Activated CD4-positive, alpha-beta T cell treated with anti-CD3 and anti-CD28 coated beads for 36 hours (primary cell): ENCODE measurements at regions of chr5 and their contacts with region 1.

Region 1: GRCh38 chr5:142748568-142749249 is 21.5 kb upstream of the ARHGAP26 start:
- DNase-seq: peak; percentile 77
- ATAC-seq: peak; percentile 79
- H3K4me3 Mint-ChIP-seq: no peak overlapping the region
- H3K27ac Mint-ChIP-seq: no peak overlapping the region
- H3K4me1 Mint-ChIP-seq: peaks cover 13% of the 10 kb centered on the region
- H3K27me3 Mint-ChIP-seq: peaks cover 2% of the 10 kb centered on the region

Region 2: GRCh38 chr5:142763701-142764100 is 15.0 kb after region 1 on chr5:
- CTCF ChIA-PET with region 1: interaction called, 75 read pairs
- POLR2A ChIA-PET with region 1: interaction called, 4 read pairs
- intact Hi-C with region 1: no loop called
- DNase-seq: no peak
- ATAC-seq: no peak
- H3K4me3 Mint-ChIP-seq: no peak overlapping the region
- H3K27ac Mint-ChIP-seq: no peak overlapping the region
- H3K4me1 Mint-ChIP-seq: peaks cover 1% of the 10 kb centered on the region
- H3K27me3 Mint-ChIP-seq: no peaks in the 10 kb centered on the region

Region 3: DNA sequence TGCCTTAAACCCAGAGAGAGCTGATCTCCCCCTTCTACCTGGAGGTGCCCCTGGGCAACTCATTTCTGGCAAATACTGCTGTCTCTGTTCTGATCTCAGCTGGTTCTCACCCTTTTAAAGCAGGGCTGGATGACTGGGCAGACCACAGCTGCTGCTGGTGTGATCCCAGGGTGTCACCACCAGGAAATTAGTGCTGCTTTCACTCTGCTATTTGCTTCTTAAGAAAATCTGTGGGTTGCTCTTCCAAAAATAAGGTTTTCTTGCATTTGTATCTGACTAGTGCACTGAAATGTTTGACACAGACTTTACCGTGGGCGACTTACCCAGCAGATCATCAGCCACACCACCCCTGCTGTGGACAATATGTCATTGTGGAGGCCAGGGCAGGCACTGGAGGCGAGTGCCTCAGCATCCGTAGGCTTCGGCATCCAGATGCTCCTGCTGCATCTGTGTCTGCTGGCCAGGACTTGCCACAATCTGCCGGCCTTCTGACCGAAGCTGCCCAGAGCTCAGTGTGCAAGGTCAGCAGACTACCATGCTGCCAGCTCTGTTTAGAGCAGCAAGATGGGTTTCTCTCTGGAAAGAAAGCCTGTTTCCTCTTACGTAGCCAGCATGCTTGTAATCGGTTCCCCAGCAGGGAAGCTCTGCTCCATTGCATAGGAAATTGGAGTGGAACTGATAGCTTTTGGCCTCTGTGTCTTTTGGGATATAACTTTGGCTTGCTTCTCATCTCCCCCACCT is 35.1 kb after region 1 on chr5:
- CTCF ChIA-PET with region 1: interaction called, 13 read pairs
- POLR2A ChIA-PET with region 1: interaction called, 3 read pairs
- intact Hi-C with region 1: no loop called
- DNase-seq: peak; percentile 88
- ATAC-seq: peak; percentile 93
- H3K4me3 Mint-ChIP-seq: peak overlapping the region; percentile 45
- H3K27ac Mint-ChIP-seq: peak overlapping the region; percentile 82
- H3K4me1 Mint-ChIP-seq: peaks cover 69% of the 10 kb centered on the region
- H3K27me3 Mint-ChIP-seq: no peaks in the 10 kb centered on the region

Region 4: GRCh38 chr5:142874537-142874936 is 125.8 kb after region 1 on chr5:
- CTCF ChIA-PET with region 1: interaction called, 229 read pairs
- POLR2A ChIA-PET with region 1: no interaction called
- intact Hi-C with region 1: no loop called
- DNase-seq: no peak
- ATAC-seq: no peak
- H3K4me3 Mint-ChIP-seq: no peak overlapping the region
- H3K27ac Mint-ChIP-seq: no peak overlapping the region
- H3K4me1 Mint-ChIP-seq: no peaks in the 10 kb centered on the region
- H3K27me3 Mint-ChIP-seq: no peaks in the 10 kb centered on the region

Region 5: GRCh38 chr5:142888469-142889085 is 139.9 kb after region 1 on chr5:
- CTCF ChIA-PET with region 1: interaction called, 229 read pairs
- POLR2A ChIA-PET with region 1: no interaction called
- intact Hi-C with region 1: loop called (anchors 2 kb)
- DNase-seq: no peak
- ATAC-seq: no peak
- H3K4me3 Mint-ChIP-seq: no peak overlapping the region
- H3K27ac Mint-ChIP-seq: no peak overlapping the region
- H3K4me1 Mint-ChIP-seq: no peaks in the 10 kb centered on the region
- H3K27me3 Mint-ChIP-seq: no peaks in the 10 kb centered on the region

Region 6: DNA sequence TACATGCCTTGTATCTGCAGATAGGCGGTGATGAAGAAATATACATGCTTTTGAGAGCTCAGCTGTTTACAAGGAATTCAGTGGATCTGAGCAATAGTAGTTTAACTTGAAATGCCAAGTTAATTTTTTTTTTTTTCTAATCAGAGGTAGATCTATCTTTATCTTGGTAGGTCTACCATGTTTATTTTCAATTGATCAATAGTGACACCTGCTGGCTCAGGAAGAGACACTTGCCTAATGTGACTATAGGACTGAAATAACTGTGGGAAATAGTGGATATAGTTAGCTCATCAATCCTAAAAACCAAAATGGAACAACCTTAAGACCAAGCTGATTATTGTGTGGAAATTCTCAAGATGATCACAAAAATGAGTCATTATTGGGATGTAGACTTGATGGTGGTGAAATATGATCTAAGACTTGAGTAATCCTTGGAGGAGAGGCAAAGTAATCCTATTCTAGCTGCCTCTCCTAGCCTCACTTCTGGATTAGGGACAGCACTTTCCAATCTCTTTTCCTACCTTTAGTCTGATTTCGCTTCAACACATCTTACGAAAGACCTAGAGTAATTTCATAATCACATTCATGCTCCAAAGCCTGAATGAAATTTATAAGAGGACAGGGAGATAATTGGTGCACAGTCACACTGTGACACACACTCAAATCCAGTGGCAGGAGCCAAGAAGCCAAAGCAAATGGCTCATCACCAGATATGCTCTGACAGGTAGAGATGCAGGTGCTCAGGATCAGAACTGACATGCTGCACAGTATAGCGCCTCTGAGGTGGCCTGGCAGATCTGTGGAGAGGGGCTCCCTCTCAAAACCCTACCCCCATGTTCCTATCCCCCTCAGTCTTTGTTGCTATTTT is 1219.5 kb after region 1 on chr5:
- CTCF ChIA-PET with region 1: no interaction called
- POLR2A ChIA-PET with region 1: no interaction called
- intact Hi-C with region 1: loop called in 1 of 2 experiments (anchors 10 kb)
- DNase-seq: peak; percentile 8
- ATAC-seq: peak; percentile 80
- H3K4me3 Mint-ChIP-seq: no peak overlapping the region
- H3K27ac Mint-ChIP-seq: no peak overlapping the region
- H3K4me1 Mint-ChIP-seq: no peaks in the 10 kb centered on the region
- H3K27me3 Mint-ChIP-seq: no peaks in the 10 kb centered on the region